Ovary (tissue), 10 donors: ENCODE measurements at regions of chr11 and their contacts with region 1.

Region 1: GRCh38 chr11:36478700-36479329 is 31.3 kb downstream of the TRAF6 start:
- DNase-seq: peak in 1 of 5 donors; percentile 56
- H3K4me3 ChIP-seq: no peak overlapping the region
- H3K27ac ChIP-seq: no peak overlapping the region
- H3K4me1 ChIP-seq: no peaks in the 10 kb centered on the region
- H3K27me3 ChIP-seq: no peaks in the 10 kb centered on the region
- CTCF ChIP-seq: peak in 2 of 3 donors; percentile 49 to 53
- EP300 ChIP-seq: no peak
- POLR2A ChIP-seq: no peak

Region 2: GRCh38 chr11:36009473-36009872 is 469.3 kb before region 1 on chr11:
- intact Hi-C with region 1: no loop called
- DNase-seq: no peak
- H3K4me3 ChIP-seq: no peak overlapping the region
- H3K27ac ChIP-seq: peak overlapping the region in 1 of 2 donors; percentile 54
- H3K4me1 ChIP-seq: peaks cover 20% of the 10 kb centered on the region
- H3K27me3 ChIP-seq: no peaks in the 10 kb centered on the region
- CTCF ChIP-seq: no peak
- EP300 ChIP-seq: no peak
- POLR2A ChIP-seq: no peak

Region 3: DNA sequence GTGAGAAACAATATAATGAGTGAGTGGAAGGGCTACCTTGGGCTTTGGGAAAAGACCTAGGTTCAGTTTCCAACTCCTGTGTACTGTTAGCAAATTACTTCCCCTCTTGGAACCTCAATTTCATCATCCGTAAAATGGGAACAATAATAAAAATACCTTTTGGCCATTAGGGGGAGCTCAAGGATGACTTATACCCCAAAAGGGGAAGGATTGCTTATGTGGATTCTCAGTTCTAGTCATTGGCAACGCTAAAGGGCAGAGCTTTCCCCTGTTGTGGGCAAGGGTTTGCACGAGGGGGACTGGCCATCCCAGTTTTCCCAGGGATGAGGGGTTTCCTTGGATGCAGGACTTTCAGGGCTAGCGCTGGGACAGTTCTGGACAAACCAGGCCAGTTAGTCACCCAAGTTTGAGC is 186.5 kb before region 1 on chr11:
- intact Hi-C with region 1: loop called in 1 of 4 experiments (anchors 10 kb)
- DNase-seq: no peak
- H3K4me3 ChIP-seq: no peak overlapping the region
- H3K27ac ChIP-seq: no peak overlapping the region
- H3K4me1 ChIP-seq: peaks cover 3% of the 10 kb centered on the region
- H3K27me3 ChIP-seq: no peaks in the 10 kb centered on the region
- CTCF ChIP-seq: peak in 2 of 3 donors; percentile 15 to 25
- EP300 ChIP-seq: no peak
- POLR2A ChIP-seq: no peak

Region 4: GRCh38 chr11:36306888-36307287 is 171.9 kb before region 1 on chr11:
- intact Hi-C with region 1: loop called in 2 of 4 experiments (anchors 10 kb)
- DNase-seq: peak in 1 of 5 donors; percentile 48
- H3K4me3 ChIP-seq: no peak overlapping the region
- H3K27ac ChIP-seq: no peak overlapping the region
- H3K4me1 ChIP-seq: no peaks in the 10 kb centered on the region
- H3K27me3 ChIP-seq: no peaks in the 10 kb centered on the region
- CTCF ChIP-seq: peak in 2 of 3 donors; percentile 27 to 51
- EP300 ChIP-seq: no peak
- POLR2A ChIP-seq: no peak